Activated B cell treated with CpG ODN at 0.5 μM for 24 hours (primary cell): ENCODE measurements at regions of chr12 and their contacts with region 1.

Region 1: DNA sequence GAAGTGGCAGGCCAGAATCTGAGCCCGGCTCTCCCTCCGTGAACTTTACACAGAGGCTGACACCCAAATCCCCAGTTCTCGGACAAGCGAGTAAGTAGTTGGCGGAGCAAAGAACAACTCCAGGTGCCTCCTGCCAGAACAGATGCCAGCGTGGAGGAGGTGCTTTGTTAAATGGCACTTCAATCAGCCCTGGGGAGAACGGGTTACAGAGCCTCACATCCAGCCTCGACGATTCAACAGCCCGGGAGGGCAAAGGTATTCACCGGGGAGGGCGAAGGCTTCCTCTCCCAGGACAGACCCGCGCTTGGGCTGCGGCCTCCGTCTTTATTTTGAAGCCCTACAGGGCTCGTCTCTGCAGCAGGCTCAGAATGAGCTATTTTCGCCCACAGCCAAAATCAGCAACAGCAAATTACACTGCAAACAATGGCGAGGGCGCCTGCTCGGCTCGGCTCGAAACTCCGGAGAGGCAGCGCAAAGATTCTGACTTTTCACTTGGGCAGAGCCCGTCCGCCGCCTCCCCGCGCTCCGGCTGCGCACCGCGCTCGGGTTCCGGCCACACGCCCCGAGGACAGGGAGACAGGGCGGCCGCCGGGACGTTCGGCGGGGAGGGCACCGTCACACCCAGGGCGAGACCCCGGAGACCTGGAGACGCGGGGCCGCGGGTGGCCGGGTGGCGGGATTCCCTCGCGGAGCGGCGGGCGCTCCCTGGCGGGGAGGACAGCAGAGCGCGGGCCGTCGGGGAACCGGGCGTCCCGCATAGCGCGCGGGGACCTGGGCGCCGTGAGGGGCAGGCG is 811 bp downstream of the TMCC3 start:
- DNase-seq: peak; percentile 55
- ATAC-seq: peak; percentile 69
- H3K4me3 Mint-ChIP-seq: peak overlapping the region; percentile 86
- H3K27ac Mint-ChIP-seq: no peak overlapping the region
- H3K4me1 Mint-ChIP-seq: peaks cover 29% of the 10 kb centered on the region
- H3K27me3 Mint-ChIP-seq: no peaks in the 10 kb centered on the region
- CTCF ChIP-seq: no peak

Region 2: GRCh38 chr12:94133964-94134795 is 515.4 kb before region 1 on chr12:
- CTCF ChIA-PET with region 1: no interaction called
- POLR2A ChIA-PET with region 1: no interaction called
- intact Hi-C with region 1: loop called (anchors 10 kb)
- DNase-seq: no peak
- ATAC-seq: peak; percentile 97
- H3K4me3 Mint-ChIP-seq: no peak overlapping the region
- H3K27ac Mint-ChIP-seq: no peak overlapping the region
- H3K4me1 Mint-ChIP-seq: peaks cover 9% of the 10 kb centered on the region
- H3K27me3 Mint-ChIP-seq: no peaks in the 10 kb centered on the region
- CTCF ChIP-seq: peak; percentile 19

Region 3: DNA sequence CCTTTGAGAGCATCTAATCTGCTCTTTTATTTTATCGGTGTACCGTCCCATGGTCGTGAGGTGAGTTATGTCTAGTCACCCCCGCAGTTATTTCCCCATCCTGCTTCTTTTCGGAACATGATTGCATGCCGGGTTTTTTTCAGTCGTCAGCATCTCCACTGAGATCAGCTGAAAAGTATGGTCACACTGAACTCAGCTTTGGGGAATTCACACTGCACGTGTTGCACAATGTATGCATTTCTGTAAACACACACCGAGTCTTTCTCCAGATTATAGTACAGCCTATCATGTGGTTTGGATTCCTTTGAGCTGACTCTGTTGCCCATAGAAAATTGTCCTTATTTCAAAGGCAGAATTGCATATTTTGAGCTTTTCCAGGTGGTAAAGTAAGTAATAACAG is 476.6 kb before region 1 on chr12:
- CTCF ChIA-PET with region 1: no interaction called
- POLR2A ChIA-PET with region 1: no interaction called
- intact Hi-C with region 1: no loop called
- DNase-seq: no peak
- ATAC-seq: no peak
- H3K4me3 Mint-ChIP-seq: no peak overlapping the region
- H3K27ac Mint-ChIP-seq: peak overlapping the region; percentile 30
- H3K4me1 Mint-ChIP-seq: peaks cover 43% of the 10 kb centered on the region
- H3K27me3 Mint-ChIP-seq: no peaks in the 10 kb centered on the region
- CTCF ChIP-seq: no peak

Region 4: DNA sequence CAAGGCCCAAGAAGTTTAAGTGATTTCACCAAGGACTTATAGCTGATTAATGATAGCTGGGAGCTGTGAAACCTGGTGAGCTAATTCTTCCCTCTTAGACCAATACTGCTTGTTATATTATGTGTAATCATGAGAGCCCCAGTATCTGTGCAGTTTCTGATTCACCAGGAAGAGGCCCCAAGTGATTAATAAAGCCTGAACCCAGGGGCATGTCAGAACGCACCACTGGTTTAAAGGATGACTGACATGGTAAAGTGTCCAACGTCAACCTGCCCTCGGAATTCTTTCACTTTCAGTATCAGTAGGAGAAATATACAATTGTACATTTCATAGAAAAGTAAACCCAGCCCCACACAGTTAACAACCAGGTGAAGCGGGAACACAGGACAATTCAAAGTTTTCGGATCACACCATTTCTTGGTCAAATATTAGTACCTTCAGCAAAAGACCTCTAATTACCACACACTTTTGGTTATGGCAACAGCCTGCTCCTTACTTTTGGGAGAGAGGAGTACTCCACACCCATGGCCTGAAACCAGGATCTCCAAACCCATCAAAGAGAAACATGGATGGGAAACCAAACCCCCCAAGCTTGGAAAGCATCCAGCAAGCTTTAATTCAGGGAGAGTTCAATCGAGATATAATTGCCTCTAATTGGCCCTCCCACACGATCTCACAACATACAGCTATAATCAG is 27.7 kb before region 1 on chr12:
- CTCF ChIA-PET with region 1: no interaction called
- POLR2A ChIA-PET with region 1: interaction called, 3 read pairs
- intact Hi-C with region 1: loop called (anchors 1 kb)
- DNase-seq: no peak
- ATAC-seq: peak; percentile 96
- H3K4me3 Mint-ChIP-seq: peak overlapping the region; percentile 71
- H3K27ac Mint-ChIP-seq: peak overlapping the region; percentile 68
- H3K4me1 Mint-ChIP-seq: peaks cover 24% of the 10 kb centered on the region
- H3K27me3 Mint-ChIP-seq: no peaks in the 10 kb centered on the region
- CTCF ChIP-seq: no peak

Region 5: DNA sequence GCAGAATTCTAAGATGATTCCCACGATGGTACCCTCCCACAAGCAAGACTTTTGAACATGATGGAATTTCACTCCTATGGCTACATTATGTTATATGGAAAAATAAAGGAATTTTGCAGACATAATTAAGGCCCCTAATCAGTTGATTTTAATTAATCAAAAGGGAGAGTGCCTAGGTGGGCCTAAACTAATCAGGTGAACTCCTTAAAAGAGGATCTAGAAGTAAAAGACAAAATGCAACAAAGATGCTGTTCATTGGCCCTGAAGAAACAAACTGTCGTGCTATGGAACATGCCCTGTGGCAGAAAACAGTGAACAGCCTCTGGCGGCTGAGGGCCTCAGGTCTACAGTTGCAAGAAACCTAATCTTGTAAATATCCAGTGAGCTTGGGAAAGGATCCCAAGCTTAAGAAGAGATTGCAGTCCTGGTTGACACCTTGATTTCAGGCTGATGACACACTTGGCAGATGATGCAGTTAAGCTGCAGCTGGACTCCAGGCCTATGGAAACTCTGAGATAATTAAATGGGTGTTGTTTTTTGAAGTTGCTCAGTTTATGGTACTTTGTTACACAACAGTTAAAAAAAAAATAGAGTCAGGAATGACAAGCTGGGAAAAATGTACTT is 13.0 kb before region 1 on chr12:
- CTCF ChIA-PET with region 1: no interaction called
- POLR2A ChIA-PET with region 1: no interaction called
- intact Hi-C with region 1: no loop called
- DNase-seq: no peak
- ATAC-seq: no peak
- H3K4me3 Mint-ChIP-seq: no peak overlapping the region
- H3K27ac Mint-ChIP-seq: no peak overlapping the region
- H3K4me1 Mint-ChIP-seq: peaks cover 10% of the 10 kb centered on the region
- H3K27me3 Mint-ChIP-seq: no peaks in the 10 kb centered on the region
- CTCF ChIP-seq: no peak

Region 6: GRCh38 chr12:94676031-94676641 is 26.6 kb after region 1 on chr12:
- CTCF ChIA-PET with region 1: no interaction called
- POLR2A ChIA-PET with region 1: no interaction called
- intact Hi-C with region 1: loop called (anchors 2 kb)
- DNase-seq: no peak
- ATAC-seq: peak; percentile 96
- H3K4me3 Mint-ChIP-seq: peak overlapping the region; percentile 60
- H3K27ac Mint-ChIP-seq: peak overlapping the region; percentile 81
- H3K4me1 Mint-ChIP-seq: peaks cover 39% of the 10 kb centered on the region
- H3K27me3 Mint-ChIP-seq: no peaks in the 10 kb centered on the region
- CTCF ChIP-seq: no peak